ENCODE measurements at regions of chr2 and their contacts with region 1.

Region 1: DNA sequence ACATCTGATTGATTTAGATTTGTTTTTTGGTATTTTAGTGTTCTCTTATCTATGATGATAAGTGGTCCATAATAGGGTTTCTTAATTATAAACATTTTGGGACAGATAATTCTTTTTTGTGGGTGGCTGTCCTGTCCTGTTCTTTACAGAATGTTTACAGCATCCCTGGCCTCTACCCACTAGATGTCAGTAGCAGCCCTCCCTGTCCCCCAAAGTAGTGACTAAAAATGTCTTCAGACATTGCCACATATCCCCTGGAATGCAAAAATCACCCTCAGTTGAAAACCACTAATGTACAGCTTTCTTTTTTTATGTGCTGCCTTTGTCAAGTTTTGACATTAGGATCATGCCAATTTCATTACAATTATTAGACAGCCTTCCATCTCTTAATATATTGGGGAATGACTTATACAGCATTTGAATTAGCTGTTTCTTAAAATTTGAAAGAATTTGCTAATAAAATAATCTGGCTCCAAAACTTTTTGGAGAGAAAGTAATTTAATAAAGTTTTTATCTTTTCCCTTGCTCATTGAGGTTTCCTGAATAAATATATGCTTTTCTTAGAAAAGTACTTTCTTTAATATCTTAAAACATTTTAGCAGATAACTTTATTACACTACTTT is 19.5 kb downstream of the WIPF1 start:
- DNase-seq: peak in 3 of 10 donors; percentile 31 to 85 (median 61)

Region 2: DNA sequence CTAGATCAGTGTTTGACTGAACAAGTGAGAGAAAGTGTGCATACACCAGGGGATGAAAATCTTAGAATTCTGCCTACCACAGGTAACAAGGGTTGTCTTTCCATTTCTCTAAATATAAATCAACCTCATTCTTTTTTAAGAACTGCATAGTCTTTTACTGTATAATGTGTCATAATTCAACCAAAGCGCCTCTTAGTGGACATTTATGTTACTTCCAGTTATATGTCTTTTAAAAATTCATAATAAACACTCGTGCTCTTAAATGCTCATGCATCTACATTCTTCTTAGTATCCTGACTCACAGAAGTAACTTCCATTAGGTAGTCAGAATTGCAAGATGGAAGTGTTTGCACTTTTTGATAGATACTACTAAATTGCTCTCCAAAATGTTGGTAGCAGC is 110.0 kb after region 1 on chr2:
- intact Hi-C with region 1: loop called (anchors 5 kb)
- DNase-seq: no peak